Colonic mucosa (tissue), 4 donors: ENCODE measurements at regions of chr6 and their contacts with region 1.

Region 1: DNA sequence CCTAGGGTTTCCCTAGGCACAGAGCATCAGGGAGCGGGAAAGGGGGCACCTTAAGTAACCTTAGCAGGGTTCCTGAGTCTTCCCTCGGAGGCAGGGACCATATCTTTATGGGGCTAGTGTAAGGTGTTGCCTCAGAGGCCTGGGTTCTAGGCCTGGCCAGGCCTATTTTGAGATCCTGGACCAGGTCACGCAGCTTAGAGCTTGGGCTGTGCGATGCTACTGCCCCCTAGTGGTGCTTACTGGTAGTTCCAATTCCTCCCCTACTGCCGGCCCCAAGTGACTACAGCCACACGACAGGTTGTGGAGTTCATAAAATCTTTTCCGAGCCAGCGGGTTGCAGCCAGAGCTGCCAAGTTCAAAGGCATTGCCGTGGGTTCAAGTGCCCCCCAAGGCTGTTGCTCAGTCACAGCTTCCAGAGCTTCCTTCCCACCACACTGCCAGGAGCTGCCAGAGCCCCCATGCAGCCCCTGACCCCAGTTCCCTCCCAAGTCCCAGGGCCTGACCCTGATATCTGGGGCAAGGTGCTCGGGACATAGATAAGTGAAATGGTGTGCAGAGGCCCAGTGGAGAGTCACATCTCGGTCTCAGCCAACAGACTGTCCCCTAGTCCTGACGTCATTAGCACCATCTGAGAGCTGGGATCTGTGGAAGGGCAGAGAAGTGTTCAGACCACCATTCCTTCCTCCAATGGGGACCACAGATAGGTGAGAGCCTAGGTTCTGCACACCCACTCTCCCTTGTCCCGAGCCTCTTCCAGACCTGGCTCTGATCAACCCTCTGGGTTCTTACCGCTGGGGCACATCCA is 3.3 kb downstream of the LRRC73 start:
- DNase-seq: peak; percentile 87
- H3K4me3 ChIP-seq: no peak overlapping the region
- H3K27ac ChIP-seq: no peak overlapping the region
- H3K4me1 ChIP-seq: no peaks in the 10 kb centered on the region
- H3K27me3 ChIP-seq: no peaks in the 10 kb centered on the region
- CTCF ChIP-seq: peak; percentile 95

Region 2: GRCh38 chr6:43386492-43386891 is 120.4 kb before region 1 on chr6:
- intact Hi-C with region 1: loop called (anchors 5 kb)
- DNase-seq: no peak
- H3K4me3 ChIP-seq: no peak overlapping the region
- H3K27ac ChIP-seq: no peak overlapping the region
- H3K4me1 ChIP-seq: no peaks in the 10 kb centered on the region
- H3K27me3 ChIP-seq: no peaks in the 10 kb centered on the region
- CTCF ChIP-seq: peak; percentile 30

Region 3: DNA sequence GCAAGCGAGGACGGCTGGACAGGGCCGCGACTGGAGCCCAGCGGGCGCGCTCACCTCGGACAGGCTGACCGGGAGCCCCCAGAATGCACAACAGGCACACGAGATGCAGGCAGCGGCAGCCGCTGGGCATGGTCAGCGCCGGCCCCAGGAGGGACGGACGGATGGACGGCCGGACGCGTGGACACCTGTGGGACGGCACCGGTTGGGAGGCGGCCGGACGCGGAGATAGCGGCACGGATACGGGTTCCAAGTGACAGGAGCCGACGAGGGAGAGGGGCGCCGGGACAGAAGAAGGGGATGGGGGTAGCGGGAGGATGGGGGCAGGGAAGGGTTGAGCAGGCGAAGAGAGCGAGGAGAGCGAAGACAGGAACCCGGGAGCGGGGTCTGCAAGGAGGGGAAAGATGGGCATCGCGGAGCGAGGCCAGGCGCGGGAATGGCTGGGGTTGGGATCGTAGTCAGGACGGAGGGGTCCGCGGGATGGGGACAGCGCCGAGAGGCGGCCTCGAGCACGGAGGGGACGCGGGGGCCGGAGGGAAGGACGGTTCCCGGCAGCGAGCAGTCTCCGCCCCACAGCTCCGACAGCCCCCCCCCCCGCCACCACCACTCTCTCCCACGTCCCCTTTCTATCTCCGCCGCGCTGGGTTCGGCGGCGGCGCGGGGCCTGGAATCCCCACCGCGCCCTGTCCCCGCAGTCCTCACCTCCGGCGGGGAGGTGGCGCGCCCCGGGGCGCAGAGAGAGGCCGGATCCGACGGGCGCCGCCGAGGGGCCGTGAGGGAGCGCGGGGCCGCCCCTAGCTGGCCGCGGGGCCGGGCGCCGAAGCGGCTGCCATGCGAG is 52.0 kb before region 1 on chr6:
- intact Hi-C with region 1: loop called (anchors 2 kb)
- DNase-seq: peak; percentile 88
- H3K4me3 ChIP-seq: peak overlapping the region; percentile 50
- H3K27ac ChIP-seq: no peak overlapping the region
- H3K4me1 ChIP-seq: peaks cover 5% of the 10 kb centered on the region
- H3K27me3 ChIP-seq: peaks cover 13% of the 10 kb centered on the region
- CTCF ChIP-seq: no peak

Region 4: DNA sequence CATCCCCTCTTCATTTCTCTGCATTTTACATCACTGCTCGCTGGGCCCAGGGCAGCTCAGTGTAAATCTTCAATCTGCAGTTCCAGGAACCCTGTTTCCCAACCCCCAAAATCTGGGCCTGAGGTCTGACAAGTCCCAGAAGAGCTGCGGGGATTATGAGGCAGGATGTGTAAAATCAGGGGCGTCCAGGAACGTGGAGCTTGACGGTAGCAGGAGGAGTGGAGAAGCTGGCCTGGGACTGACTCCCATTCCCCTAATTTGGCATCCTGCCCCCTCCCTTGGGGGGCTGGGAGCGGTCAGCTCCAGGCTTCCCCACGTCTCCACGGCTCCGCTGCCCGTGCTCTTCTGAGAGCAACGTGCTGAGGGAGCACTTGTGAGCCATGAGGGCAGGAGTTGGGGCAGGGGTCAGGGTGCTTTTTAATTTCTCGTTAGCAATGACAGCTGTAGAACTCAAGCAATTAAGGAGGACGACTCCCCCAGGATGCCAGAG is 239.8 kb after region 1 on chr6:
- intact Hi-C with region 1: no loop called
- DNase-seq: no peak
- H3K4me3 ChIP-seq: no peak overlapping the region
- H3K27ac ChIP-seq: no peak overlapping the region
- H3K4me1 ChIP-seq: no peaks in the 10 kb centered on the region
- H3K27me3 ChIP-seq: no peaks in the 10 kb centered on the region
- CTCF ChIP-seq: no peak

Region 5: DNA sequence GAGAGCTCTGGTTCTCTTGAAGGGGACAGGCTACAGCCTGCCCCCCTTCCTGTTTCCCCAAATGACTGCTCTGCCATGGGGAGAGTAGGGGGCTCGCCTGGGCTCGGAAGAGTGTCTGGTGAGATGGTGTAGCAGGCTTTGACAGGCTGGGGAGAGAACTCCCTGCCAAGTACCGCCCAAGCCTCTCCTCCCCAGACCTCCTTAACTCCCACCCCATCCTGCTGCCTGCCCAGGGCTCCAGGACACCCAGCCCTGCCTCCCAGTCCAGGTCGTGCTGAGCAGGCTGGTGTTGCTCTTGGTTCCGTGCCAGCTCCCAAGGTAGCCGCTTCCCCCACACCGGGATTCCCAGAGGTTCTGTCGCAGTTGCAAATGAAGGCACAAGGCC is 273.0 kb after region 1 on chr6:
- intact Hi-C with region 1: no loop called
- DNase-seq: no peak
- H3K4me3 ChIP-seq: no peak overlapping the region
- H3K27ac ChIP-seq: no peak overlapping the region
- H3K4me1 ChIP-seq: peaks cover 5% of the 10 kb centered on the region
- H3K27me3 ChIP-seq: no peaks in the 10 kb centered on the region
- CTCF ChIP-seq: no peak